ENCODE measurements at regions of chr10 and their contacts with region 1.

Region 1: GRCh38 chr10:106682175-106682574 is 482.3 kb downstream of the SORCS1 start:
- DNase-seq: peak in 1 of 42 donors; percentile 40

Region 2: DNA sequence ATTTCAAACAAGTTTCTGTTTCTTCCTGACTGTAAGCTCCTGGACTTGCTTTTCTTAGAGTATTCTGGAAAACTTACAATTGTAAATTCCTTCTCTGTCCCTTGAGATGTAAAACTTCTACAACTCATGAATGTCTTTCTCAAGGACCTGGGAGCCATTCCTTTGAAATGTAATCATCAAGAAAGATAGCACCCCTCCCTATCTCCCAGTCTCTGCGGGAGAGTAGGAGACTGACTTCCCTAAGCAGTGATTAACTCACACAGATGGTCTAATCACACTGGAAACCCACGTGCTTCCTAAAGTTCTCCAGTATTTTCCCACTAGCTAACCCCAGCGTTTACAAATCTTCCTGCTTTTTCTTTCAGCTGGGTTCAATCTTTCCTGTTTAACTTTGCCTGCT is 67.1 kb before region 1 on chr10:
- intact Hi-C with region 1: loop called (anchors 5 kb)
- DNase-seq: no peak

Region 3: DNA sequence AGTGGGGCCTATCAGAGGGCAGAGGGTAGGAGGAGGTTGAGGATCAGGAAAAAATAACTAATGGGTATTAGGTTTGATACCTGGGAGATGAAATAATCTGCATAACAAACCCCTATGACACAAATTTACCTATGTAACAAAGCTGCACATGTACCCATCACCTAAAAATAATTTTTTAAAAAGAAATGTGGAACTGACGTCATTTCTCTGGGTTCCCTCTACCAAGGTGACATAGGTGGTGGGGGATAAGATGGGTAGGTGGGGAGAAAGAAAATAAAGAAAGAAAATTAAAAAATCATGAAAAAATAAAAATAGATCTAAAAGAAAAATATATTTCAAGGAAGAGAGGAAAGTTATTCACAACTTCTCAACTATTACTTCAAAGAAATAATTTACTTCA is 635.4 kb after region 1 on chr10:
- intact Hi-C with region 1: no loop called
- DNase-seq: no peak